Panc1 (cell line): ENCODE measurements at regions of chr1 and their contacts with region 1.

Region 1: DNA sequence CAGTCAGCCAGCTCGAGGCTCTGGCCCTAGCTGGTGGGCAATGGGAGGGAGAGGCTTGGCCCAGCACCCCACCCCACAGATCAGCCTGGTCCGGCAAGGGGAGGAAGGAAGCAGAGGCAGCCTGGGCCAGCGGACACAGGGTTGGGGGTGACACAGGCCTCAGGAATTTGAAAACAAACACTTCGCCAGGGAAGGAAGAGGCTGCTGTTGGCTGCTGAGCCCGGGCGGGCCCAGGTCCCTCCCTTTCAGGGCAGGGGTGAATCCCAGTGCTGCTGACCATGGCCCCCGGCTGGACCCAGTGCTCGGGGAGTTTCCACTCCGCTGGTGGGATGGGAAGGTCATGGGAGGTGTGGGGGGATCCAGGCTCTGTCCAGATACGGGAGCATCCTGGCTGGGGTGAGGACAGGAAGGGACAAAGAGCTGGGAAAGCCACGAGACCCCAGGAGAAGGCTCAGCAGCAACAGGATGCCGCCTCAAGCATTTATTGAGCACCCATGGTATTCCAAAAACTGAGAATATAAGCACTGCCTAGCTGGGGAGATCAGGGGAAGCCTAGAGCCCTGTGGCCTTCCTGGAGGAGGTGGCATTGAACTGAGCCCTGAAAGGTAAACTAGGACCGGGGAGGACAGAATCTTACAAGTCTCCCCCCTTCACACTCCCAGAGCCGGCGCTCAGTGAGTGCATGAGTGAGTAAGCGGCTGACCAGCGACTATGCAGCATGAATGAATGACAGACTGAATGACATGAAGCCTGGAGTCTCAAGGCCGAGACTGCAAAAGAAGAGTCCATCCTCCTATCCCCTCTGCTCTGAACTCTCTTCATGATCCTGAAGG is 26.2 kb upstream of the EPHA2 start:
- DNase-seq: no peak
- ATAC-seq: peak; percentile 91
- H3K4me3 ChIP-seq: peak overlapping the region in 1 of 2 experiments; percentile 4; a peak in 2 of 4 replicates
- H3K27ac ChIP-seq: peak overlapping the region; percentile 99
- H3K4me1 ChIP-seq: peaks cover 89% of the 10 kb centered on the region
- H3K27me3 ChIP-seq: no peaks in the 10 kb centered on the region
- CTCF ChIP-seq: no peak

Region 2: DNA sequence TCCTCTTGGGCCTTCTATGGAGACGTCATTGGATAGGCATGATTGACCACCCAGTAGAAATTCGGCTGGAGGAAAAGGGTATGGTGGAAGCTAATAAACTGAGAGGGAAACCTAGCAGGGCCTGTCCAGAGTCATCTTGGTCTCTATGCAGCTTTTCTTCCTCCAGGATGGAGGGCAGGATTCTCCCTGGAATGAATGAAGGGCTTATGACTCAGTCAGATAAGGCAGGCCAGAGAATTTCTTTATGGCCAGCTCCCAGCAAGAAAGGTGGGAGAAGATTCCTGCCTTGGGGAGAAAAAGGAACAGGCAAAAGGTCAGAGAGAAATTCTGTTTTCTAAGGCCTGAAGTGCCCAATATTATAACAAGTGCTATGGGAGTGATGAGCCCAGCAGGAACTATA is 406.4 kb before region 1 on chr1:
- CTCF ChIA-PET with region 1: no interaction called
- POLR2A ChIA-PET with region 1: no interaction called
- in situ Hi-C with region 1: no loop called
- intact Hi-C with region 1: no loop called
- DNase-seq: no peak
- ATAC-seq: no peak
- H3K4me3 ChIP-seq: no peak overlapping the region
- H3K27ac ChIP-seq: no peak overlapping the region
- H3K4me1 ChIP-seq: no peaks in the 10 kb centered on the region
- H3K27me3 ChIP-seq: no peaks in the 10 kb centered on the region
- CTCF ChIP-seq: no peak

Region 3: DNA sequence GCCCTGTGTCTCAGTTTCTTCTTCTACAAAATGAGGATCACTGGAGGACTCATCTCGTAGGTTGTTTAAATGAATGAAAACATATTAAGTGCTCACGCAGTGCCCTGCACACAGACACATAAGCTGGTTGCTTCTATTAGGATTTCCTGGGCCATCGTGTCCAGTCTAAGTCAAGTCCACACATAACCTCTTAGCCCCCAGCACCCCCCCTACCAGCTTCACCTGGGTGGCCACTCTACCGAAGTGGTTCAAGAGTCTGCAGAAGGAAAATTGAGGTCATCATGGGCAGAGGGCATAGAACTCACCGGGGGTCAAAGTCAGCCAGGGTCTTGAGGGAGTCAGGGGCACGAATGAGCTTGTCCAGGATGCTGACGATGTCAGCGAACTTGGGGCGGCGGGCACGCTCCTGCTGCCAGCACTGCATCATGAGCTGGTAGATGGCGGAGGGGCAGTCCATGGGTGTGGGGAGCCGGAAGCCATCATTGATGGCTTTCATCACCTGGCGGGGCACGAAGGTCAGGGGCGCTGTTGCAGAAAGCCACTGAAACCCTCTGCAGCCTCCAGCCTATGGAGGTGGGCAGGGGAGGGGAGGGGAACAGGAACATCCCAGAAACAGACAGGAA is 52.1 kb before region 1 on chr1:
- CTCF ChIA-PET with region 1: no interaction called
- POLR2A ChIA-PET with region 1: interaction called, 11 read pairs
- in situ Hi-C with region 1: no loop called
- intact Hi-C with region 1: loop called (anchors 10 kb)
- DNase-seq: no peak
- ATAC-seq: no peak
- H3K4me3 ChIP-seq: no peak overlapping the region
- H3K27ac ChIP-seq: peak overlapping the region; percentile 52; the same call in 1 of the 2 replicates
- H3K4me1 ChIP-seq: peaks cover 85% of the 10 kb centered on the region
- H3K27me3 ChIP-seq: no peaks in the 10 kb centered on the region
- CTCF ChIP-seq: no peak

Region 4: DNA sequence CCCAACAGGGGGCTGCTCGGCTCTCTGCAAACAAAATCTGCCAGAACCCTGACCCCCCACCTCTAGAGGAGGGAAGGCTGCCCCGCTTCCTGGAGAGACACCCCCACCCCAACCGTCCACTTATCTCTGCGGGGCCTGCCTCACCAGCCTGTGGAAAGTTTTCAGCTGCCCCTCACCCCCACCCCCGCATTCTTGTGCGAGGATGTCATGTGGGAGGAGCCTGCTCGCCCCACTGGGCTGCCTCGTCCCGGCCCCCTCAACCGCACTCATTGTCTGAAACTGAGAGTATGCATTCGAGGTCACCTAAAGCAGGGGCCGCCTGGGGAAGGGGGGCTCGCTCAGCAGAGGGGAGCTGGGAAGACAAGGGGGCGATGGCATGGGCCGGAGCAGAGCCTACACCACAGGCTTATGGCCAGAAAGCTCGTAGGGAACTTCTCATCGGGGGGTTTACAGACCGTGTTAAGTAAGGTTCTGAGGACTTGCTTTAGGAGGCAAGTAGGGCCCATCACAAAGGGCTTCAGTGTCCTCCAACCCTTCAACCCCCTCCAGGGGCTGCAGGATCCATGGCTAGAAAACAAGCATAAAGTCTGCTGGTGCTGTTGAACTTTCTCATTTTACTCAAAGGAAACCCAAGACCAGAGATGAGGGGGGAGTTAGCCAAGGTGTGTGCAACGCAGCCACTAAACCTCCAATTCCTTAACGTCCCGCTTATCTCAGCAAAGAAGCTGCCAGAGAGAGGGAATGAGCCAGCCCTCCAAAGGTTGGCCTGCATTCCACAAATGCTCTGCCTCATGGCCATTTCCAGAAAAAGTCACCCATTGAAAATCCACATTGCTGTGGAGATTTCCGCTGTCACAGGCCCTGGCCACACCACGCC is 35.6 kb before region 1 on chr1:
- CTCF ChIA-PET with region 1: interaction called, 3 read pairs
- POLR2A ChIA-PET with region 1: interaction called, 7 read pairs
- in situ Hi-C with region 1: no loop called
- intact Hi-C with region 1: loop called (anchors 5 kb)
- DNase-seq: no peak
- ATAC-seq: peak; percentile 43
- H3K4me3 ChIP-seq: peak overlapping the region; percentile 26 to 48
- H3K27ac ChIP-seq: peak overlapping the region; percentile 100
- H3K4me1 ChIP-seq: peaks cover 92% of the 10 kb centered on the region
- H3K27me3 ChIP-seq: no peaks in the 10 kb centered on the region
- CTCF ChIP-seq: no peak